A673 (cell line): ENCODE measurements at regions of chr12 and their contacts with region 1.

Region 1: GRCh38 chr12:52023182-52023975 is 16.6 kb downstream of the TAMALIN start:
- DNase-seq: peak; percentile 86
- H3K4me3 ChIP-seq: peak overlapping the region; percentile 60
- H3K27ac ChIP-seq: peak overlapping the region; percentile 44
- H3K4me1 ChIP-seq: peaks cover 19% of the 10 kb centered on the region
- H3K27me3 ChIP-seq: no peaks in the 10 kb centered on the region
- CTCF ChIP-seq: peak; percentile 99

Region 2: DNA sequence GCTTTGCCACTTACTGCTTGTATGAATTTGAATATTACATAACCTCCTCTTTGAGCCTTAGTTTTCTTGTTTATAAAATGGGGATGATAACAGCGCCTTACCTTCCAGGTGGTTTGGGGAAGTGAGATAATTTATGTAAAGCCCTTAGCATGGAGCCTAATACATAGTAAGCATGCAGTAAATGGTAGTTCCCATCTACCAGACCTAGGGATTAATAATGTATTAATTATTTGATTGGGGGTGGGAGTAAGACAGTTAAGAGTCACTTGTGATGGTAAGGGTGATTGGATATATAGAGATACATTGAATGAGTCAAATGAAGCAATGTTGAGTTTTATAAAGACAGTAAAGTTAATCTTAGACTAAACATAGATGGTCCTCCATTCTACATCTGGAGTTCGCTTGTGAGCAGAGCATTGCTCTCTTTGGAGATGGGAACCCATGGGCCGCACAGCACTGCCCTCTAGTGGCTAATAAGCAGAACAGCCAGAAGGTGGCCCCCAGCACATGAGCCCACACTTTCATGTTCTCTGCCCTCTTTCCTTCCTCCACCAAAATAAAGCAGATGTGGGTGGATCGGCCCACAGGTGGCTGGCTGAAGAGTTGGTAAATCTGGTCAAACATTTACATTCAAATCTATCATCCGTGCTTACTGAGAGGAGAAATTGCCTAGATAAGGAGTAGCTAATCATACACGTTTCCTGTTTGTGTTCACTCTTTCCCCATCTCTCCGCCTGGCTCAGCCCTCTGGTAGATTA is 43.1 kb before region 1 on chr12:
- CTCF ChIA-PET with region 1: interaction called, 10 read pairs
- POLR2A ChIA-PET with region 1: no interaction called
- intact Hi-C with region 1: no loop called
- DNase-seq: peak; percentile 77
- H3K4me3 ChIP-seq: no peak overlapping the region
- H3K27ac ChIP-seq: no peak overlapping the region
- H3K4me1 ChIP-seq: peaks cover 12% of the 10 kb centered on the region
- H3K27me3 ChIP-seq: no peaks in the 10 kb centered on the region
- CTCF ChIP-seq: peak; percentile 98

Region 3: GRCh38 chr12:52004042-52004648 is 19.2 kb before region 1 on chr12:
- CTCF ChIA-PET with region 1: interaction called, 38 read pairs
- POLR2A ChIA-PET with region 1: interaction called, 7 read pairs
- intact Hi-C with region 1: loop called (anchors 1 kb)
- DNase-seq: peak; percentile 77
- H3K4me3 ChIP-seq: no peak overlapping the region
- H3K27ac ChIP-seq: no peak overlapping the region
- H3K4me1 ChIP-seq: peaks cover 7% of the 10 kb centered on the region
- H3K27me3 ChIP-seq: no peaks in the 10 kb centered on the region
- CTCF ChIP-seq: peak; percentile 74

Region 4: GRCh38 chr12:52069327-52070184 is 46.2 kb after region 1 on chr12 and contains the start of gene ATG101:
- CTCF ChIA-PET with region 1: interaction called, 7 read pairs
- POLR2A ChIA-PET with region 1: no interaction called
- intact Hi-C with region 1: loop called (anchors 1 kb)
- DNase-seq: peak; percentile 97
- H3K4me3 ChIP-seq: peak within 1 kb of the TSS; percentile 98
- H3K27ac ChIP-seq: peak within 1 kb of the TSS; percentile 100
- H3K4me1 ChIP-seq: peaks cover 9% of the 10 kb centered on the region
- H3K27me3 ChIP-seq: no peaks in the 10 kb centered on the region
- CTCF ChIP-seq: peak; percentile 92
- total RNA-seq, gene ATG101: 52.0 and 54.3 TPM in 2 replicates

Region 5: GRCh38 chr12:52121824-52122539 is 98.6 kb after region 1 on chr12:
- CTCF ChIA-PET with region 1: interaction called, 45 read pairs
- POLR2A ChIA-PET with region 1: no interaction called
- intact Hi-C with region 1: loop called (anchors 1 kb)
- DNase-seq: peak; percentile 81
- H3K4me3 ChIP-seq: no peak overlapping the region
- H3K27ac ChIP-seq: no peak overlapping the region
- H3K4me1 ChIP-seq: peaks cover 8% of the 10 kb centered on the region
- H3K27me3 ChIP-seq: no peaks in the 10 kb centered on the region
- CTCF ChIP-seq: peak; percentile 86

Region 6: DNA sequence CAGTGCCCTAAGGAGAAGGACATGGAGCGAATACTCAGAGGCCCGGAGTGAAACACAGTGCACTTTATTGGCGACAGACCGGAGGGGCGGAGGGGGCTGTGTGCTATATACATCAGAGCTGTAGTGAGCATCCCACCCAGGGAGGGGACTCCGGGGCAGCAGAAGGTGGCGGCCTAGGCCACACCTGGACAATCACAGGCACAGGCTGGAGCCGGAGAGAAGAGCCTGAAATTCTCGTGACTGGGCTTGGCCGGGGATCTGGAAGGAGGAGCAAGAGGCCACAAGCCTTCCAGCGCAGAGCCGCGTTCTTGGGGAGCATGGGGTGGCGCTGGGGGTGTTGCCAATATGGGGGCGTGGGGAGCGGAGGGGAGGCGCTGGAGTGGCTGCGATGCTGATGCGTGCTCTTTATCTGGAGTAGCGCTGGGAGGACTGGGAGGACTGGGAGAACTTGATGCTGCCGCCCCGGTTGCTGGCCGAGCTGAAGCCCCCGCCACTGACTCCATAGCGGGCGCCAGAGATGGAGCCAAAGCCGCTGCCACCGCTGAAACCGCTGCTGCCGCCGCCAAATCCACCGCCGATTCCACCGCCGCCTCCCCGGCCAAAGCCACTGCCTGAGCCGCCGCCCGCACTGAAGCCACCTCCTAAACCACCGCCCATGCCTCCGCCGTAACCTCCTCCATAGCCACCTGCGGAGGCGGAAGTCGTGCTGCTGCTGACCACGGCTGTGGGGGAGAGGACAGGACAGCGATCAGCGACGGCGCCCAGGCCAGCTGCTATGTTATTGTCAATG is 766.5 kb after region 1 on chr12:
- CTCF ChIA-PET with region 1: no interaction called
- POLR2A ChIA-PET with region 1: no interaction called
- intact Hi-C with region 1: no loop called
- DNase-seq: no peak
- H3K4me3 ChIP-seq: no peak overlapping the region
- H3K27ac ChIP-seq: no peak overlapping the region
- H3K4me1 ChIP-seq: no peaks in the 10 kb centered on the region
- H3K27me3 ChIP-seq: no peaks in the 10 kb centered on the region
- CTCF ChIP-seq: no peak